HEK293 (cell line): ENCODE measurements at regions of chr12 and their contacts with region 1.

Region 1: DNA sequence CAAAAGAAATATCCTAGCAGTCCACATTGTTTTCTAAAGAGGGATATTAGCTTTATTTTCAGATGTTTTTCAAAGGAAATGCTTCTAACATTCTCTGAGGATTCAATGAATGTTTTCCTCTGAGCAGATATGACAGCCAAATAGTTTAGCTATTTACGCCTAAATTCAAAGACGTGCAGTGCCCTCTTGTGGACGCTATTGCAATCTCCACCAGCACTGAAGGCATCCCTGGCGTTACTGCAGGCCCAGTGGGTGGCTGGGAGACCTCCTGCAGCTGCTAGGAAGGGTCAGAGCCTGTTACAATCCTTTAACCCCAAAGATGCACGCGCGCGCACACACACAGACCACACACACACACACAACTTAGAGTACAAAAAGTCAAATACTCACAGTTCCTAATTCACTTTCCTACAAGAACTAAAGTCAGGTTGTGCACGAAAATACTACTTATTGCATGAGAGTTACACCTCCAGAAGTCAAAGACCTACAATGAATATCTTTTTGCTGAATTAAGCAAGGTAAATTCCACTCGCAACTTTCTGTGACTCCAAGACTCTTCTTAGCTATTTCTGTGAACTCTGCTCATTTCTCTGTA is 589.3 kb upstream of the TMEM132C start:
- H3K4me3 ChIP-seq: no peak overlapping the region
- H3K27ac ChIP-seq: no peak overlapping the region
- H3K4me1 ChIP-seq: no peaks in the 10 kb centered on the region
- CTCF ChIP-seq: no peak

Region 2: DNA sequence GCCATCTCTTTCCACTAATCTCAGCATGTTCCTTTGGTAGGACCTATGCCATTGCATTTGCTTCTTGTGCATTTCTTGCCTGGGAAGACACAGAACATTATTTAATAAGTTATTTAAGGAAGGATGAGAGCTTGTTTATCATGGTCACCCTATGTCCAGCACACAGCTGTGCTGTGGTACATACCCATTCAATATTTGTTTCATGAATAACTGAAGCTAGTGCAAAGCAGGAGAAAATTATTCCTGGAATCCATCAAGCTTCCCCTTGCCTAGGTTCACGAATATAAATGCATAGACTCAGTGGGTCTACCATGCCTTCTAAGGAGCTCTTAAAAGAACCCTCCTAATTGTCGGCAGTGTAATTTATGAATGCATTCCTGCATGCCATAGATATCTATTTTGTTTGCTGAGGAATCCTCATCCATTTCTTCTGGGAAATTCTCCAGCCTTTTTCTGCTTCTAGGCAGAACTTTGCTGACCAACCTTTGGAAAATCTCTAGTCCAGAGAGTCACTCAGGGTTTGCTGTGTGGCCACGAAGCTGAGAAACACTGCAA is 10.4 kb before region 1 on chr12:
- CTCF ChIA-PET with region 1: interaction called, 10 read pairs
- POLR2A ChIA-PET with region 1: no interaction called
- H3K4me3 ChIP-seq: no peak overlapping the region
- H3K27ac ChIP-seq: no peak overlapping the region
- H3K4me1 ChIP-seq: no peaks in the 10 kb centered on the region
- CTCF ChIP-seq: no peak

Region 3: GRCh38 chr12:127690161-127690560 is 12.5 kb after region 1 on chr12:
- CTCF ChIA-PET with region 1: interaction called, 14 read pairs
- POLR2A ChIA-PET with region 1: no interaction called
- H3K4me3 ChIP-seq: no peak overlapping the region
- H3K27ac ChIP-seq: no peak overlapping the region
- H3K4me1 ChIP-seq: no peaks in the 10 kb centered on the region
- CTCF ChIP-seq: no peak

Region 4: GRCh38 chr12:127819056-127819455 is 141.4 kb after region 1 on chr12:
- CTCF ChIA-PET with region 1: no interaction called
- POLR2A ChIA-PET with region 1: no interaction called
- H3K4me3 ChIP-seq: no peak overlapping the region
- H3K27ac ChIP-seq: no peak overlapping the region
- H3K4me1 ChIP-seq: no peaks in the 10 kb centered on the region
- CTCF ChIP-seq: no peak